Ascending aorta (tissue), 2 donors: ENCODE measurements at regions of chr12 and their contacts with region 1.

Region 1: DNA sequence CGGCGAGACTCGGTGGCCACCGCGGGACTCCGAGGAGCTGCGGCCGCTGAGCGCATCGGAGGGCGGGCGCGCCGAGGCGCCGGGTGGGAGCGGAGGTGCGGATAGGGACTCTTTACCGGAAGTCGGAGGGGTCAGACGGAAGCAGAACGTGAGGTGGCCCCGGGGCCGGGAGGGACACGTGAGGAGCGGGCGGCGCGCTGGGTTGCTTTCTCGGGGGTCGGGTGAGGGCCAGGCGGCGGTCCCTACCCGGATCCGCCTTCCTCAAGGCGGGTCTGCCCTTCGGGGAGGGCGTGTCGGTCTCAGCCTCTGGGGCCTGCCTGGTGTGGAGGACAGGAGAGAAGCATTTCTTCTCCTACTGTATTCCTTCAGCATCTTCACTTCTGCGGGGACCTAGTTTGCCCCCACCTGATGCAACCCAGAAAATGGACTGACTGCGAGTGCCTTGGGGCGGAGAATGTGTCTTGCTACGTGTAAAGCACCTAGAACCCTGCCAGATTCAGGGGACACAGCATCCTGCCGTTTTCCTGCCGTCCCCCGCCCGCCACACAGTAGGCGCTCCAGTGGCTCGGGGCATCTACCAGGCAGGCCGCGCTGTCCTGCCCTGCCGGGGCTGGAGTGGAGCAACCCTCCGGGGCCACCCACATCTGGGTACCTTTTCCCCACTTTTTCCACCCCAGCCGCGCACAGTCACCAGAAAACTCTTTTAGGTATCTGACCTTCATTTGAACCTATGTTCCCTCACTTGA is 517 bp upstream of the ATXN2 start:
- DNase-seq: peak; percentile 36 to 93
- H3K4me3 ChIP-seq: peak overlapping the region; percentile 91 to 95
- H3K27ac ChIP-seq: peak overlapping the region; percentile 89 to 90
- H3K4me1 ChIP-seq: peaks cover 4 to 14% of the 10 kb centered on the region in 2 donors
- H3K27me3 ChIP-seq: no peaks in the 10 kb centered on the region
- CTCF ChIP-seq: no peak

Region 2: DNA sequence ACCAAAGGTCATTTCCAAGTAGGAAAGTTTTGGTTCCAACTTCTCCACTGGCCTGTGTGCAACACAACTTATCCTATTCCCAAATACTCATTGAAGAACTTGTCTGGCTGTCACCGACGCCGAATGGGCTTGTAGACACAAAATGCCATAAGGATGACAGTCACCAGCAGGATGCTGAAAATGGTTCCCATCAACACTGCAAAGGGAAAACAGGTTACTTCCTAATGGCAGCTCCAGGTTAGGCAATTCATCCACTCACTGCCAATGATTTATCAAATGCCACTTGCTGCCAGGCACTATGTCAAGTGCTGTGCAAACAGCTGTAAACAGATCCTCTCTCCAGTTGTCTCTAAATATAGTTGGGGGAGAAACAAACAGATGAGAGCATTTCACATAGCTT is 1557.4 kb before region 1 on chr12:
- intact Hi-C with region 1: loop called (anchors 5 kb)
- DNase-seq: no peak
- H3K4me3 ChIP-seq: no peak overlapping the region
- H3K27ac ChIP-seq: peak overlapping the region in 1 of 2 donors; percentile 41
- H3K4me1 ChIP-seq: peaks cover 6 to 20% of the 10 kb centered on the region in 2 donors
- H3K27me3 ChIP-seq: no peaks in the 10 kb centered on the region
- CTCF ChIP-seq: no peak

Region 3: GRCh38 chr12:111368788-111369495 is 230.7 kb before region 1 on chr12 and contains the start of gene PHETA1:
- intact Hi-C with region 1: loop called (anchors 1 kb)
- DNase-seq: peak; percentile 56 to 96
- H3K4me3 ChIP-seq: peak within 1 kb of the TSS; percentile 79 to 91
- H3K27ac ChIP-seq: peak within 1 kb of the TSS; percentile 67 to 69
- H3K4me1 ChIP-seq: peaks cover 0 to 9% of the 10 kb centered on the region in 2 donors
- H3K27me3 ChIP-seq: no peaks in the 10 kb centered on the region
- CTCF ChIP-seq: no peak
- total RNA-seq, gene PHETA1: 12.9 TPM

Region 4: DNA sequence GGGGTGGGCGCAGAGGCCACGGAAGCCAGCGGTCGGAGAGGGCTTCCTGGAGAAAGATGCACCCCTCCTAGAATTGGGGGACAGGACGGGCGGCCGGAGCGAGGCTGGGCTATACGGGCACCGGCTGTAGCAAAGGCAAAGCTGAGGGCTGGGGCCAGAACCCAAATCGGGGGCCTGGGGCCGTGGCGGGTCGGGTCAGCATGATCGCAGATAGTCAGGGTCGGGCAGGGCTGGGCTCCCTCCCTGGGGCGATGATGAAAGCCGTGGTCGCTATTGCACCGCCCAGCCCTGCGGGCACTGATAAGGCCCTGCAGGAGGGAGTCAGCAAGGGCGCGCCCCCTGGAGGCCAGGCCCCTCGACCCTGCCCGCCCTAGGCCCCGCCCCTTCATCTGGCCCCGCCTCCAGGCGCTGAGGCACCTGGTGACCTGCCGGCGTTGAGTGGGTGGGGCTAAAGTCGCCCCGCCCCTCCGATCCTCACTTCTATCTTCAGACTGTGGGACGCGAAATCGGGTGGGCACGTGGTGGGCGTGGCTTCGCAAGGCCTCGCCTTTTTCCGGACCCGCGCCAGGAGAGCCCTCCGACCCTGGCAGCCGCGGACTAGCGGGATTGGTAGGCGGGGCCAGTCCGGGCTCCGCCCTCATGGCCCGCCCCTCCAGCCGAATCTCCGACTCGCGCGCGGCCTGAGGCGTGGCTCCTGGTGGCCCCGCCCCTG is 194.3 kb before region 1 on chr12:
- intact Hi-C with region 1: loop called (anchors 2 kb)
- DNase-seq: peak; percentile 90 to 96
- H3K4me3 ChIP-seq: peak overlapping the region; percentile 83 to 90
- H3K27ac ChIP-seq: peak overlapping the region; percentile 72 to 91
- H3K4me1 ChIP-seq: peaks cover 10 to 33% of the 10 kb centered on the region in 2 donors
- H3K27me3 ChIP-seq: no peaks in the 10 kb centered on the region
- CTCF ChIP-seq: peak; percentile 40 to 61 (median 53)

Region 5: GRCh38 chr12:111685744-111686517 is 86.3 kb after region 1 on chr12 and contains the starts of genes ACAD10 and BRAP:
- intact Hi-C with region 1: loop called (anchors 5 kb)
- DNase-seq: peak; percentile 71 to 96
- H3K4me3 ChIP-seq: peak within 1 kb of the TSS; percentile 78 to 88
- H3K27ac ChIP-seq: peak within 1 kb of the TSS; percentile 82 to 88
- H3K4me1 ChIP-seq: peaks cover 10 to 18% of the 10 kb centered on the region in 2 donors
- H3K27me3 ChIP-seq: no peaks in the 10 kb centered on the region
- CTCF ChIP-seq: no peak
- total RNA-seq, gene ACAD10: 32.0 TPM
- total RNA-seq, gene BRAP: 6.2 TPM

Region 6: DNA sequence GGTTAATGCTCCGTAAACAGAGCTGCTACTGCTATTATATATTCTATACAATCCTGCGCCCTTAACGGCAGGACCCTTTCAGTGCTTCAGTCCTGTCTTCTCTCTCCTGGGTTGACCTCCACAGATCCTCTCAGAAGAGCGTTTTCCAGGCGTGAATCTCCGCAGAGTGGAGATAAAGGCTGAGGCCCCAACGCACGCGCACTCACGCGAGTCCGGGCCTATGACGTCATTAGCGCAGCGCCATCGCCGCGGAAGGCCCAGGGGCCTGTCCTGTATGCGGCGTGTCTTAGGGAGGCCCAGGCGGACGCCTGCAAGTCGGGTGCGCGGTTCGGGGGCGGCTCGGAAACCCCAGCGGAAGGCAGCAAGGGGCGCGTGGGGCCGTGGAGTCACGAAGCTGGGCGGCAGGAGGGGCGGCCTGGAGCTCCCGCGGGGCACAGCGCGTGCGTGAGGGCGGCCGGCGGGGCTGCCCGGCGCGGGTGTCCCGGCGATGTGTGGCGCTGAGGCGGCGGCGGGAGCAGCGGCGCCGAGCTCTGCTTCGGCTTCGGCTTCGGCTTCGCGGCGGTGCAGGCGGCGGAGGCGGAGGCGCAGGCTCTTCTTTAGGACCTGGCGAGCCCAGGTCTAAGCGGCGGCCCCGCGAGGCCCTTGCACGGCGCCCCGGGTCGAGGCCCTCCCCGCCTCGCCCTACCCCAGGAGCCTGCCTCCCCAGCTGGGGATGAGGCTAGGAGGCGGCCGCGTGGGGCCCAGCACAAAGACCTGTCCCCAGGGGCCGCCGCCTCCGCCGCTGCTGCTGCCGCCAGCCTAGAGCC is 242.3 kb after region 1 on chr12 and contains the start of gene MAPKAPK5:
- intact Hi-C with region 1: loop called (anchors 5 kb)
- DNase-seq: peak; percentile 74 to 97
- H3K4me3 ChIP-seq: peak within 1 kb of the TSS; percentile 92 to 96
- H3K27ac ChIP-seq: peak within 1 kb of the TSS; percentile 88 to 94
- H3K4me1 ChIP-seq: peaks cover 8 to 23% of the 10 kb centered on the region in 2 donors
- H3K27me3 ChIP-seq: no peaks in the 10 kb centered on the region
- CTCF ChIP-seq: no peak
- total RNA-seq, gene MAPKAPK5: 6.4 TPM

Region 7: DNA sequence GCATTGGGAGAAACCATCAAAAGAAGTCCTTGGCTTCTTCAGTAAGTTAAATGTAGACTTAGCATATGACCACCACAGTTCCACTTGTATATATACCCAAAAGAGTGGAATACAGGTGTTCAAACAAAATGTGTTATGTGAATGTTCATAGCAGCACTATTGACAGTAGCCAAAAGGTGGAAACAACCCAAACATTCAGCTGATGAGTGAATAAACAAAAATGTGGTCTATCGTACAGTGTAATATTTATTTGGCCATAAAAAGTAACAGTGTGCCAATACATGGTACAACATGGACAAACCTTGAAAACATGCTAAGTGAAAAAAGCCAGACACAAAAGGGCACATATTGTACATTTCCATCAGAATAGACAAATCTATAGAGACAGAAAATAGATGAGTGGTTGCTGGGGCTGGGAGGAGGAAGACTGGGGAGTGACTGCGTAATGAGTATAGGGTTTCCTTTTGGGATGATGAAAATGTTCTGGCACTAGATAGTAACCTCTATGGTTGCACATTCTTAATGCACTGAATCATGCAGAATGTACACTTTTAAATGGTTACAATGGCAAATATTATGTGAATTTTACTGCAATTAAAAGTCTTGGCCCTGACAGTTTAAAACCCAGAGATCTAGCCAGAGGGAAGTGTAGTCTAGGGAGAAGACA is 419.1 kb after region 1 on chr12:
- intact Hi-C with region 1: no loop called
- DNase-seq: no peak
- H3K4me3 ChIP-seq: no peak overlapping the region
- H3K27ac ChIP-seq: no peak overlapping the region
- H3K4me1 ChIP-seq: peaks cover 0 to 8% of the 10 kb centered on the region in 2 donors
- H3K27me3 ChIP-seq: no peaks in the 10 kb centered on the region
- CTCF ChIP-seq: no peak